ENCODE measurements at regions of chr2 and their contacts with region 1.

Region 1: GRCh38 chr2:190069936-190070696 is 7.6 kb upstream of the MSTN start:
- DNase-seq: peak; percentile 24
- CTCF ChIP-seq: peak; percentile 67

Region 2: DNA sequence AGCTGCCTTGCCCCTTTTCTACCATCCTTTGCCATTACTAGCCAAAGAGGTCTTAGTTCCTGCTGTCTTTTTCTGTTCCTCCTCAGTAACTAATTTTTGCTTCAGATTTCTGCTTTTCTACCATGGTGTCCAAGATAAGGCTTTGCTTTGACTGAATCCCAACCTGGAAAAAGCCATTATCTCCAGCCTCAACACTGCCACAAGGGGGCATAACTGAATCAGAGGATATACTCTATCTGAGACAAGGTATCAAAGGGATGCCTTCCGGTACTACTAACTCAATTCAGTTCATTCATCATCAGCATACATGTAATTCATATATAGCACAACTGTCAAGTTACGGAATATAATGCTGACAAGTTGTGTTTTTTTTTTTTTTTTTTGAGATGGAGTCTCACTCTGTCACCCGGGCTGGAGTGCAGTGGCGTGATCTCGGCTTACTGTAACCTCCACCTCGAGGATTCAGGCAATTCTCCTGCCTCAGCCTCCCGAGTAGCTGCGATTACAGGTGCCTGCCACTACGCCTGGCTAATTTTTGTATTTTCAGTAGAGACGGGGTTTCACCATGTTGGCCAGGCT is 318.9 kb before region 1 on chr2:
- CTCF ChIA-PET with region 1: interaction called, 19 read pairs
- POLR2A ChIA-PET with region 1: no interaction called
- DNase-seq: peak; percentile 35
- CTCF ChIP-seq: peak; percentile 65

Region 3: GRCh38 chr2:189798312-189799029 is 271.6 kb before region 1 on chr2:
- CTCF ChIA-PET with region 1: interaction called, 12 read pairs
- POLR2A ChIA-PET with region 1: no interaction called
- DNase-seq: peak; percentile 18
- CTCF ChIP-seq: peak; percentile 47

Region 4: DNA sequence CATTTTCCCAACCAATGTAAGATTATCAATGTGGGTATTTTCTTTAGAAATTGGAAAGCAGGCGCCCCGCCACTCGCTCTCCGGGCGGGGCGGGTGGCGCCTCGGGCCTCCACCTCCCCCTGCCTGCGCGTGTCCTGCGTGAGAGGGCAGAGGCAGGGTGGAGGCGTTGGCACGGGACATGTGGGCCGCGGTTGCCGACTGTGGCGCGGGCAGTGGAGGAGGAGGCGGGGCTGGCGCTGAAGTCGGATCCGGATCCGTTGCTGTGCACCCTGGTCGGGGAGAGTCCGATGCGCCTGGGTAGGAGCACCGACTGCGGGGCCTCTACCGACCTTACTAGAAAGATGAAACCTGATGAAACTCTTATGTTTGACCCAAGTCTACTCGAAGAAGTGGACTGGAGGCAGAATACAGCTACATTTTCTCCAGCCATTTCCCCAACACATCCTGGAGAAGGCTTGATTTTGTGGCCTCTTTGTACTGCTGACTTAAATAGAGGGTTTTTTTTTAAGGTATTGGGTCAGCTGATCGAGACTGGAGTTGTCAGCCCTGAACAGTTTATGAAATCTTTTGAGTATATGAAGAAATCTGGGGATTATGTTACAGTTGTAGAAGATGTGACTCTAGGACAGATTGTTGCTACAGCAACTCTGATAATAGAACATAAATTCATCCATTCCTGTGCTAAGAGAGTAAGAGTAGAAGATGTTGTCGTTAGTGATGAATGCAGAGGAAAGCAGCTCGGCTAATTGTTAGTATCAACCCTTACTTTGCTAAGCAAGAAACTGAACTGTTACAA is 248.0 kb before region 1 on chr2:
- CTCF ChIA-PET with region 1: no interaction called
- POLR2A ChIA-PET with region 1: no interaction called
- DNase-seq: no peak
- CTCF ChIP-seq: no peak

Region 5: DNA sequence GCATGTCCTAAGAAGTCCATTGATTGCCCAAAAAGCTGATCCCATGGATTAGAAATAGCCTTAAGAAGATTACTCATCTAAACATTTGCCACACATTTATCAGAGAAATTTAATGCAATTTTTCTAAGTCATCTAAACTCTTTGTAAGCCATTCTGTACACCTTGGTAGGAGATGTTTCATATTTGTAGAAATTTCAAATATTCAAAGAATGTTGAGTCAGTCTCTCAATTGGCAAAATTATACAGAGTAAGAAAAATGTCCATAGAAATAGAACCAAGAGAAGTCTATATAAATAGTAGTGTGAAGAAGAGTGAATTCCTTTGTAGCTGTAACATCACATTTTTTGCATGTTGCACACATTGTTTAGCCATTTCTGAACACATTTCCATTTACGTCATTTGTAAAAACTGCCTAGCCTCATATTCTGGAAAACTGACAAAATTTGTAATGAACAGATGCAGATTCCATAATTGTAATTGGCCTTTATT is 136.2 kb before region 1 on chr2:
- CTCF ChIA-PET with region 1: no interaction called
- POLR2A ChIA-PET with region 1: no interaction called
- DNase-seq: no peak
- CTCF ChIP-seq: no peak

Region 6: GRCh38 chr2:190088917-190089316 is 18.8 kb after region 1 on chr2:
- CTCF ChIA-PET with region 1: interaction called, 25 read pairs
- POLR2A ChIA-PET with region 1: no interaction called
- DNase-seq: peak; percentile 50
- CTCF ChIP-seq: peak; percentile 56

Measured in GM10248 (cell line).